ENCODE measurements at regions of chr17 and their contacts with region 1.

Region 1: DNA sequence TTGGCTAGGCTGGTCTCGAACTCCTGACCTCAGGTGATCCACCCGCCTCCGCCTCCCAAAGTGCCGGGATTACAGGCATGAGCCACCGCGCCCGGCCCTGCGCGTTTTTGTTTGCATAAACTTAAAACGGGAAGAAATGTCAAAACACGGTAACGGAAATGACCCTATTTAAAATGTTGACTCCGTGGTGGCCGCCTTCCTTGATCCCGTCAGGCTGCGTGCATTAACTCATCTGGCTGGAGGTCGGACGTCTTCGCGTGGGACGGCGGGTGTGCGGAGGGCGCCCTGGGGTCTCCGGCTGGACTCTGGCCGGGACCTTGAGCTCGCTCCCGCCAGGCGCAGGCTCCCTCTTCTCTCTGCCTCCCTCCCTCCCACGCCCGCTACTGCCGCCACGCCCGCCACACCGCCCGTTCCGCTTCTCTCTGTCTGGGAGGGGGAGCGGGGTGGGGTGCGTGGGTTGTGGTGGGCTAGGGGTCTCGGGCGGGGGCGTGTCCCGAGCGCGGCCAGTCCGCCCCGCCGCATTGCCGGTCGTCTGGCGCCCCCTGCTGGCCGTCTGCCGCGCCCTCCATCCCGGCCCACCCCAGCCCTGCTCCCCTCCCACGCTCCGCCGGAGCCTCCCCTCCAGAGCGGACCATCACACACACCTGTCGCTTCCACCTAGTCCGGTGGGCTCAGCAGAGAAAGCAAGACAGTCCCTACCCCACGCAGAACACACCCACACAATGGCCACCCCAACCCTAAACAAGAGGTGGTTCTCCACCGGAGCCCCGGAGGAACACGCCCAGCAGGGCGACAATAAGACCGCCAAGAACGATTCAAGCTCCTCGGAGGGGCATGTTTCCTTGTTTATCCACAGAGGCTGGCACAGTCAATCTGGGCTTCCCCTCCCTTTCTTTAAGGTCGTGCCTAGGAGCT is 1.2 kb upstream of the CCDC42 start:
- DNase-seq: no peak
- H3K4me3 ChIP-seq: peak overlapping the region; percentile 61
- CTCF ChIP-seq: peak; percentile 82

Region 2: GRCh38 chr17:8383143-8383822 is 362.6 kb before region 1 on chr17 and contains the start of gene RPL26:
- CTCF ChIA-PET with region 1: interaction called, 11 read pairs
- POLR2A ChIA-PET with region 1: interaction called, 3 read pairs
- DNase-seq: peak; percentile 90
- H3K4me3 ChIP-seq: peak within 1 kb of the TSS; percentile 75
- CTCF ChIP-seq: peak; percentile 77

Region 3: DNA sequence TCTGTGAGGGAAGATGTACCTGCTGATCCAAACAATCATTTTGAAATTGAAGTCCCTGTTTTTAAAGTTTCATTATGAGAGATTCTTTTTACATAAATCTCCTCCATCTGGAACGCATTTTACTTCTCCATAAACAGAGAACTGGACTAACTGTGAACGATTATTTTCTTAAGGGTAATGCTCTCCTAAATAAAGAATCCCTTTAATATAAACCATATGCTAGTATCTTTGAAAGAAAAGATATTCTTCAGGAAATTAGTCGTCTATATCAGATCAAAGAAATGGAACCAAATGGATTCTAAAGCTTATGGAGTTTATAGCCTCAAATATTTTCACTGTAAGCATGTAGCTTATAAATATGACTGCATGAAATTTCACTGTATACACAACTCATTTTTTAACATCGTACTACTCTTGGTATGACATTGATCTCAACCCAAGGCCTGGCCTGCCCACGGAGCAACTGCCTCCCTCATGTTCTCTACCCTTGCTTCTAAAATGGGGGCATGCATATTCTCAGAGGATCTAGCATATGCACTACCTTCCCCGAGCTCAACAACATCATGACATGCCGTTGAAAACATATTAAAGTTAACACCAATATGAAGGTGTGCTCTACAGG is 181.8 kb before region 1 on chr17:
- CTCF ChIA-PET with region 1: interaction called, 12 read pairs
- POLR2A ChIA-PET with region 1: no interaction called
- DNase-seq: no peak
- H3K4me3 ChIP-seq: no peak overlapping the region
- CTCF ChIP-seq: no peak

Region 4: DNA sequence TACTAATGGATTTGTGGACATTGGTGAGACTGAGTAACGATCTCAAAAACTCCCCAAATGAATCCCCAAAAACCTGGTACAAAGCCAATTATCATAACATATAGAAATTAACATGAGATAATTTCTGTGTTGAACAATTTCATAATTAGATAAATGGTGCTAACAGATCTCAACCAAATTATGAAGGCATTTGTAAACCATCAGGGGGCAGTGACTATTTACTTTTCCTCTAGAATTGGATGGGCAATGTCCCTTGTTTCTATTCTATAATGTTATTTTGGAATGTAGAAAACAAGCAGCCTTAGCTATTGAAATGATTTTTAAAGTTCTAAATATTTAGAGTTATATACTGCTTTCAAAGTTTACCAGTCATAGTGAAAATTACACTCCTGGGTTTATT is 173.1 kb before region 1 on chr17:
- CTCF ChIA-PET with region 1: interaction called, 19 read pairs
- POLR2A ChIA-PET with region 1: no interaction called
- DNase-seq: no peak
- H3K4me3 ChIP-seq: no peak overlapping the region
- CTCF ChIP-seq: no peak

Region 5: GRCh38 chr17:8718001-8718563 is 27.8 kb before region 1 on chr17:
- CTCF ChIA-PET with region 1: no interaction called
- POLR2A ChIA-PET with region 1: no interaction called
- DNase-seq: no peak
- H3K4me3 ChIP-seq: no peak overlapping the region
- CTCF ChIP-seq: no peak

Region 6: DNA sequence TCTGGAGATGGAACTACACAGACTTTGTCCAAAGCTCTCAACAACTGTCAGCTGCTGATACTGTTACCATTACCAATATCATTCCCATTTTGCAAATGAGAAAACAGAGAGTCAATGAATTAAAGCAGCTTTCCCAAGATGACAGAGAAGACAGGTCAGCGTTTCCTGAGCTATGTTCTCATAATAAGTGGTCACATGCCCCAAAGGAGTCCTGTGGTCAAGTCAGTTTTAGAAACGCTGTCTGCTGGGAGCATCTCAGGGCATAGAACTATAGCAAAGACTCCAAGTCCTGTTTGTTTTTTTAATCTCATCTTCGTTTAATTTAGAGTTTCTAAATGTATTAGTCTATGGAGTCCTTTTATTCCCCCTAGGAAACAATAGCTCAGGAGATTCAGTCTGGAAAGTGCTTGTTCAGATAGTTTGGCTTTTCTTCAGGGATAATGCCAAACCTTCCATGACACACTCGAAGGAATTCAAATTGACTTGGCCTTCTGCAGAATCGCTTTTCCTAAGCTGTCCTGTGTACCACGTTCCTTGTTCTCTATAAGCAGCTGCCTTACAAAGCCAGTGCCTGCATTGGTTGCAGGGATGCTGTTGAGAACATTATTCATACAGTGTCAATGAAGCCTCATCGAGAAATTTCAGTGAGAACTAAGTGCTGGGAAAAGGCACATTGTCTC is 13.3 kb before region 1 on chr17:
- CTCF ChIA-PET with region 1: interaction called, 20 read pairs
- POLR2A ChIA-PET with region 1: no interaction called
- DNase-seq: no peak
- H3K4me3 ChIP-seq: no peak overlapping the region
- CTCF ChIP-seq: no peak